CD14-positive monocyte (primary cell): ENCODE measurements at regions of chr7 and their contacts with region 1.

Region 1: GRCh38 chr7:40604601-40605438 is 470.0 kb downstream of the SUGCT start:
- DNase-seq: peak; percentile 44 to 54 (median 52)
- H3K4me3 ChIP-seq: no peak overlapping the region
- H3K4me3 Mint-ChIP-seq: no peak overlapping the region
- H3K27ac ChIP-seq: no peak overlapping the region
- H3K27ac Mint-ChIP-seq: no peak overlapping the region
- H3K4me1 ChIP-seq: peaks cover 7 to 8% of the 10 kb centered on the region in 2 donors
- H3K4me1 Mint-ChIP-seq: peaks cover 12% of the 10 kb centered on the region
- H3K27me3 ChIP-seq: no peaks in the 10 kb centered on the region
- H3K27me3 Mint-ChIP-seq: peaks cover 0 to 3% (median 0%) of the 10 kb centered on the region in 3 donors
- CTCF ChIP-seq: peak; percentile 81

Region 2: DNA sequence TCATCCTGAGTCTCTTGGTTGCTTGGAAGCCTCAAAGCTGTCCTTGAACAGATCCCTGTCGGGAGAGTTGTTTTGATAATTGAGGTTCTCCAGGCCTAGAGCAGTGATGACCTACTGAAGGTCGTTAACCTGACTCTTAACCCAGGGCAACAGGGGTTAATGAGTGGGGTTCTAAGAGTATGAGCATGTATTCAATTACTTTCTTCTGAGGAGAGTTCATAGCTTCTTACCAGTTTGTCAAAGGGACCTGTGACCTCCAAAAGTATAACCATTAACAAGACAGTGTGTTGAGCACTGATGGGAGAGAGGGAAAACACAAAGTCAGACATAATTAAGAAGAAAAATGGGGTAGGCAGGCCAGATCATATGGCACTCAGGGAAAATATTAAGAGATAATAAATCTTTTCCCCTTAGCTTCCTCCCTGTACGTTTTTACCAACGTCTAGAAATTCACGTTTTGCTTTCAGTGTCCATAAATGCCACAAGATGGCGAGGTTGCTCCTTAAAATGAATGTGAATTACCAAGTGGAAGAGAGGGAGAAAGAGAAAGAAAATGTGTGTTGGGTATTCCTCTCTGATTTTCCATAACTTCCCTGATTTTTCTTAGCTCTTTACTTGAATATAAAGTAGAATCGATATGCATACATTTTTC is 372.5 kb before region 1 on chr7:
- intact Hi-C with region 1: loop called (anchors 5 kb)
- DNase-seq: peak; percentile 38 to 52 (median 42)
- H3K4me3 ChIP-seq: no peak overlapping the region
- H3K4me3 Mint-ChIP-seq: no peak overlapping the region
- H3K27ac ChIP-seq: no peak overlapping the region
- H3K27ac Mint-ChIP-seq: no peak overlapping the region
- H3K4me1 ChIP-seq: no peaks in the 10 kb centered on the region
- H3K4me1 Mint-ChIP-seq: peaks cover 8% of the 10 kb centered on the region
- H3K27me3 ChIP-seq: no peaks in the 10 kb centered on the region
- H3K27me3 Mint-ChIP-seq: no peaks in the 10 kb centered on the region
- CTCF ChIP-seq: peak; percentile 68

Region 3: GRCh38 chr7:40329601-40330153 is 275.1 kb before region 1 on chr7:
- intact Hi-C with region 1: loop called (anchors 5 kb)
- DNase-seq: peak; percentile 23 to 49 (median 39)
- H3K4me3 ChIP-seq: no peak overlapping the region
- H3K4me3 Mint-ChIP-seq: no peak overlapping the region
- H3K27ac ChIP-seq: no peak overlapping the region
- H3K27ac Mint-ChIP-seq: no peak overlapping the region
- H3K4me1 ChIP-seq: peaks cover 0 to 3% of the 10 kb centered on the region in 2 donors
- H3K4me1 Mint-ChIP-seq: peaks cover 5% of the 10 kb centered on the region
- H3K27me3 ChIP-seq: no peaks in the 10 kb centered on the region
- H3K27me3 Mint-ChIP-seq: no peaks in the 10 kb centered on the region
- CTCF ChIP-seq: peak; percentile 89

Region 4: GRCh38 chr7:40507166-40507565 is 97.7 kb before region 1 on chr7:
- intact Hi-C with region 1: loop called (anchors 5 kb)
- DNase-seq: peak; percentile 2 to 23 (median 11)
- H3K4me3 ChIP-seq: no peak overlapping the region
- H3K4me3 Mint-ChIP-seq: no peak overlapping the region
- H3K27ac ChIP-seq: no peak overlapping the region
- H3K27ac Mint-ChIP-seq: peak overlapping the region in 1 of 7 donors; percentile 26
- H3K4me1 ChIP-seq: no peaks in the 10 kb centered on the region
- H3K4me1 Mint-ChIP-seq: no peaks in the 10 kb centered on the region
- H3K27me3 ChIP-seq: no peaks in the 10 kb centered on the region
- H3K27me3 Mint-ChIP-seq: no peaks in the 10 kb centered on the region
- CTCF ChIP-seq: peak; percentile 62

Region 5: DNA sequence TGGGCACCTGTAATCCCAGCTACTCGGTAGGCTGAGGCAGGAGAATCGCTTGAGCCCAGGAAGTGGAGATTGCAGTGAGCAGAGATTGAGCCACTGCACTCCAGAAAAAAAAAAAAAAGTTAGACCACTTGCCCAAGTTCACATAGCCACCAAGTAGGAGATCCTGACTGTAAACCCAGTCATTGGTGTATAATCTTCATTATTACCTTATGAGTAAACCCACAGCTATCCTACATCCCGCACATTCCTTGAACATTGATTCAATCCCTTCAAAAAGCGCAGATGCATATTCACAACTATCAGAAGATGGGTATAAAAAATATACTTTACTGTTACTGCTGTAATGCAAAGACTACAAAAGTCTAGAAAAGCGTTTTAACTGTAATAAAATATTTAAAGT is 42.9 kb after region 1 on chr7:
- intact Hi-C with region 1: no loop called
- DNase-seq: no peak
- H3K4me3 ChIP-seq: no peak overlapping the region
- H3K4me3 Mint-ChIP-seq: no peak overlapping the region
- H3K27ac ChIP-seq: no peak overlapping the region
- H3K27ac Mint-ChIP-seq: no peak overlapping the region
- H3K4me1 ChIP-seq: no peaks in the 10 kb centered on the region
- H3K4me1 Mint-ChIP-seq: peaks cover 6% of the 10 kb centered on the region
- H3K27me3 ChIP-seq: no peaks in the 10 kb centered on the region
- H3K27me3 Mint-ChIP-seq: peaks cover 0 to 2% (median 0%) of the 10 kb centered on the region in 3 donors
- CTCF ChIP-seq: no peak